ENCODE measurements at regions of chr3 and their contacts with region 1.

Region 1: DNA sequence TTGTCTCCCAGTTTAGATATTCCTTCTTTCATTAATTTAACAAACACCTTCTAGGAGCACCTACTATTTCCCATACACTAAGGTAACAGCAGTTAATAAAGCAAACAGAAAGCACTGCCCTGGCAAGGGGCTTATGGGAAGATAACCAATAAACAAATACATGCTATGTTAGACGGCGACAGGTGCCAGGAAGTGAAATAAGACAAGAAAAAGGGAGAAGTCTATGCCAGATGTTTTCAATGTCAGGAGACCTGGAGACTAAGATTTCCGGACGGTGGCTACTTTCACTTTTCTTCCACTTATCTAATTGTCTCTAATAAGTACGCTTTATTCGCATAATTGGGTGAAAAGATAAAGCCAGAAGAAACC is 32.5 kb upstream of the ZNF445 start:
- DNase-seq: no peak
- ATAC-seq: no peak
- H3K4me3 ChIP-seq: peak overlapping the region; percentile 100
- H3K27ac ChIP-seq: peak overlapping the region; percentile 99
- H3K4me1 ChIP-seq: peaks cover 5% of the 10 kb centered on the region
- H3K27me3 ChIP-seq: no peaks in the 10 kb centered on the region

Region 2: DNA sequence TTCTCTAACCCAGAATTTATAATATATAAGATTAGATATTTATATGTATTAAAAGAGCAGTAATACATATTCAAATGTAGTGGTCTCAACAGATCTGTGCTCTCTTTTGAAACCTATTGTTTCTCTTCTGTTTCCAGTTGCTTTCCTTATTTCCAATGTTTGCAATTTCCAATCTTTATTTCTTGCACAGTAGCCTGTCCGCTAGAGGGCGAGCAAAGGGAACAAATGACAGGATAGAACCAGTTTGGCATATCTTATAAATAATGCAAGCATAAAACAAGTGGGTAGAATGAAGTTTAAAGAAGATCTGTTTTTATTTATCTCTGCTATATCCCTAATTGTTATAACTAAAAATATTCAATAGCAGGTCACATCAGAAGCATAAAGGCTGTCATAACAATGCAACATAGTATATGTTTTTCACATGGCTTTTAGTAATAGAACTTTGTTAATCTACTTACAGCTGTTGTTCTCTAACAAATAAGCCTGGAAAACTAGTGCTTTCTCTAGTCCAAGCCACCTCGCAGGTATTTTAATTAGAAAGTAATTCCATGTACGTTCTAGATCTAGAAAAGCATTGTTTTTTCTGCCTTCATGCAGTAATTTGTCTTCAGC is 186.5 kb before region 1 on chr3:
- intact Hi-C with region 1: loop called in 1 of 4 experiments (anchors 10 kb)
- DNase-seq: peak; percentile 62 to 80 (median 69)
- ATAC-seq: peak in 1 of 2 donors; percentile 44
- H3K4me3 ChIP-seq: no peak overlapping the region
- H3K27ac ChIP-seq: no peak overlapping the region
- H3K4me1 ChIP-seq: no peaks in the 10 kb centered on the region
- H3K27me3 ChIP-seq: no peaks in the 10 kb centered on the region

Region 3: DNA sequence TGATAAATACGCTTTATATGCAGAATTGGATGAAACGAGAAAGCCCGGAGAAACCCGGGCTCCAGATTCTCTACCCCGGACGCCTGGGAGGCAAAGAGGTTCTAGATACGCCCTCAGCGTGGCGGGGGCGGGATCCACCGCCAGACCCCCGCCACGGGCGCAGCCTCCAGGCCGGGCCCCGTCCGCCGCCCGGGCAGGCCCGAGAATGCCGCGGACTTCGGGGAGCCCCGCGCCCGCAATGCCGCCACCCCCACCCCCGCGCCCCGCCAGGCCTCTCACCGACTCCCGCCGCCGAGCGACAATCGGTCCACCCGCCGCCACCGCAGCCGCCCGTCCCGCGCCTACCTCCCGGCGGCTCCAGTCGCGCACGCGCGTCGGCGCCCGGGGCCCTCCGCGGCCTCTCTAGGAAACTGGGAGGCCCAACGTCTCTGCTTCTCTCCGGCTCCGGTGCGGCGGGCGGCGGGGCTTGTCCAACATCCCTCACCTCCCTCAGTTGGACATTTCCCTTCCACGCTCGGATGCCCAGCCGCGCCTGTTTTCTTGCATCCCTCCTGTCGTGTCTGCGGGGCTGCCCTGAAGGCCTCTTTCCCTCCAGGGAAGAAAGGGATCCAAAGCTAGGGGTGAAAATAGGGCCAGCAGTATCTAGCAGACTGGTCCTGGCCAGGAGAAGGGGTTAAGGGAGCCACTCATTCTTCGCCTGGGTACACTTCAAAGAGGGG is 32.5 kb before region 1 on chr3 and contains the start of gene ZNF445:
- intact Hi-C with region 1: loop called in 1 of 4 experiments (anchors 2 kb)
- DNase-seq: peak; percentile 84 to 93 (median 93)
- ATAC-seq: peak; percentile 98
- H3K4me3 ChIP-seq: peak within 1 kb of the TSS; percentile 99
- H3K27ac ChIP-seq: no peak within 1 kb of the TSS
- H3K4me1 ChIP-seq: no peaks in the 10 kb centered on the region
- H3K27me3 ChIP-seq: no peaks in the 10 kb centered on the region
- total RNA-seq, gene ZNF445: 14.2 to 15.6 (median 14.9) TPM

Measured in right cardiac atrium (tissue), 5 donors.